H1 (cell line): ENCODE measurements at regions of chr2 and their contacts with region 1.

Region 1: GRCh38 chr2:134167019-134167600 is 86.8 kb upstream of the MGAT5 start:
- DNase-seq: no peak
- H3K4me3 ChIP-seq: no peak overlapping the region
- H3K27ac ChIP-seq: no peak overlapping the region
- H3K4me1 ChIP-seq: peaks cover 0 to 7% (median 3%) of the 10 kb centered on the region in 4 experiments; a peak in 4 of 7 replicates
- H3K27me3 ChIP-seq: no peaks in the 10 kb centered on the region
- CTCF ChIP-seq: no peak
- EP300 ChIP-seq: no peak
- POLR2A ChIP-seq: no peak
- RAD21 ChIP-seq: no peak

Region 2: GRCh38 chr2:134087371-134087921 is 79.7 kb before region 1 on chr2:
- CTCF ChIA-PET with region 1: no interaction called
- POLR2A ChIA-PET with region 1: no interaction called
- DNase-seq: no peak
- H3K4me3 ChIP-seq: no peak overlapping the region
- H3K27ac ChIP-seq: no peak overlapping the region
- H3K4me1 ChIP-seq: peaks cover 0 to 12% (median 3%) of the 10 kb centered on the region in 4 experiments; a peak in 2 of 7 replicates
- H3K27me3 ChIP-seq: no peaks in the 10 kb centered on the region
- CTCF ChIP-seq: no peak
- EP300 ChIP-seq: no peak
- POLR2A ChIP-seq: no peak
- RAD21 ChIP-seq: no peak

Region 3: DNA sequence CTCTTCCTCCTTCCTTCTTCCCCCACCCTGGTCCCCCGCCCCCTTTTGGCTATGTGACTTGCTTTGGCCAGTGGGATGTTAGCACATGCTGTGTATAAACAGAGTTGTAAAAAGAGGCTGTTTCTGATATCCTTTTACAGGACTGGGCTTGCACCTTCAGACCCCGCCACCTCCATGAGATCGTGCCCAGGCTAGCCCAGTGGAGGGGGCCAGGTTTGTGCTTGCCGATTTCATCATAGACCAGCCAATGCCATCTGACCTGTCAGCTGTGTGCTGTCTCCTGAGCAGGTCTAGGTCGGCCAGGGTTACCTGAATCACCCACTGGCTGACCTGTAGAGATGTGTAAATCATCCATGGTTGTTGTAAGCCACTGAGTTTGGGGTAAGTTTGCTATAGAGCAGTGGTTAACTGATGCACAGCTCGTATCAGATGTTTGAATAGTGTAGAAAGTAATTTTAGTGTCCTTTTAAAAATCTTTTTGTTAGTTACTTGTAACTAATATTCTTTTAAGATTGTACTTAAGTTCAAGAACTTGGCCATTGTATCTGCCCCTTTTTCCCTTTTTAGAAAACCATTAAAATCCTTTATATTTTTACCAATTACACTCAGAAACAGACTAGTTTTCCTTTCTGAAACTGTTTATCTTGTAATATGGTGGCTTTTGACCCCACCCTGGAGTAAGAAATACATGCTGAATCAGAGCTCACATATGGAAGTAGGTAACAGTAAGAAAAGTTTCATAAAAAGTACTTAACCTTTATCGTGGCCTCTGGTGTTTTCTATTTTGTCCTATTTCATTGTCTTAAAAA is 35.2 kb before region 1 on chr2:
- CTCF ChIA-PET with region 1: no interaction called
- POLR2A ChIA-PET with region 1: no interaction called
- DNase-seq: no peak
- H3K4me3 ChIP-seq: no peak overlapping the region
- H3K27ac ChIP-seq: no peak overlapping the region
- H3K4me1 ChIP-seq: peaks cover 3 to 20% (median 14%) of the 10 kb centered on the region in 4 experiments; a peak in 5 of 7 replicates
- H3K27me3 ChIP-seq: no peaks in the 10 kb centered on the region
- CTCF ChIP-seq: no peak
- EP300 ChIP-seq: no peak
- POLR2A ChIP-seq: no peak
- RAD21 ChIP-seq: no peak

Region 4: GRCh38 chr2:134155134-134155533 is 12.0 kb before region 1 on chr2:
- CTCF ChIA-PET with region 1: interaction called, 11 read pairs
- POLR2A ChIA-PET with region 1: no interaction called
- DNase-seq: no peak
- H3K4me3 ChIP-seq: no peak overlapping the region
- H3K27ac ChIP-seq: no peak overlapping the region
- H3K4me1 ChIP-seq: peaks cover 0 to 17% (median 9%) of the 10 kb centered on the region in 4 experiments; a peak in 5 of 7 replicates
- H3K27me3 ChIP-seq: no peaks in the 10 kb centered on the region
- CTCF ChIP-seq: no peak
- EP300 ChIP-seq: no peak
- POLR2A ChIP-seq: no peak
- RAD21 ChIP-seq: no peak